Right lobe of liver (tissue), 6 donors: ENCODE measurements at regions of chr17 and their contacts with region 1.

Region 1: GRCh38 chr17:45197555-45198334 is 23.9 kb upstream of the FMNL1 start:
- DNase-seq: peak; percentile 94 to 95 (median 95)
- ATAC-seq: peak; percentile 96 to 99 (median 98)
- H3K4me3 ChIP-seq: no peak overlapping the region
- H3K27ac ChIP-seq: peak overlapping the region in 2 of 3 donors; percentile 40 to 47
- H3K4me1 ChIP-seq: peaks cover 0 to 17% (median 8%) of the 10 kb centered on the region in 4 donors
- H3K27me3 ChIP-seq: no peaks in the 10 kb centered on the region
- CTCF ChIP-seq: peak; percentile 99 to 100 (median 100)
- POLR2A ChIP-seq: no peak

Region 2: GRCh38 chr17:45135192-45135977 is 62.4 kb before region 1 on chr17 and contains the start of gene ACBD4:
- intact Hi-C with region 1: loop called in 1 of 2 experiments (anchors 5 kb)
- DNase-seq: peak; percentile 94 to 97 (median 94)
- ATAC-seq: peak; percentile 72 to 81 (median 75)
- H3K4me3 ChIP-seq: peak within 1 kb of the TSS; percentile 72 to 92 (median 79)
- H3K27ac ChIP-seq: peak within 1 kb of the TSS; percentile 85 to 98 (median 89)
- H3K4me1 ChIP-seq: peaks cover 0 to 36% (median 6%) of the 10 kb centered on the region in 4 donors
- H3K27me3 ChIP-seq: no peaks in the 10 kb centered on the region
- CTCF ChIP-seq: peak; percentile 100
- POLR2A ChIP-seq: peak; percentile 93
- total RNA-seq, gene ACBD4: 24.0 to 78.9 (median 56.9) TPM

Region 3: DNA sequence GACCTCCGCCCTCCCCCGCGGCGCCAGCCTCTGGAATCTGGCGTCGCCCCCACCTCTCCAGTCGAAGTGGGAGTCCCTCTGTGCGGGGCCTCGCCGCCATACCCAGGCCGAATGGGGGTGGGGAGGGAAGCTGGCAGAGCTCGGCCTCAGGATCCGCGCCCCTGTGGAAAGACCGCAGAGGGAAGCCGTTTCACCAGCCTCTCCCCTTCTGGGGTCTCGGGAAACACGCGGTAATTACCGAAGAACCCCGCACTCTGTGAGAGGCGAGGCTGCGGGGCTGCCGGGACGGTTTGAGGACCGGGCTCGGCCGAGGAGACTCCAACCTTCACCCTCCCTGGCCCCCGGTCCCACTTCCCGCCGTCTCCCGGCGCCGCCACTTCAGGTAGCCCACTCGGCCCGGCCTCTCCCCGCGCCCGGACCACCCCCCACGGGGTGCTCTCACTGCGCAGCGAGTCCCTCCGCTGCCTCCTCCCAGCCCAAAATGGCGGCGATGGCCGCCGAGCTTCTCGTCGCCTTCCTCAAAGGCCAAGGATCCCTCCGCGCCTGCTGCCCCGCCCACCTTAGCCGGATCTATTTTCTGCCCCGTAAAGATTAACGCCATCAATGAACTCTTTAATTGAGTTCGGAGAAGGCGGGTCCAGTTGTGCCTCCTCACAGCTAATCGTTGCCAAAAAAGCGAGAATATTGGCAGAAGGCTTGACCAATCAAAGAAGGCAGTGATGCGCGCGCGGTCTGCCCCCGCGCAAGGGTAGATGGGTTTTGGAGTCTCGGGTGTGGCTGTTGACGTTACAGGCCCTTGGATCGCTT is 36.5 kb before region 1 on chr17:
- intact Hi-C with region 1: loop called in 1 of 2 experiments (anchors 5 kb)
- DNase-seq: peak; percentile 96 to 98 (median 98)
- ATAC-seq: peak; percentile 90 to 97 (median 92)
- H3K4me3 ChIP-seq: peak overlapping the region; percentile 89 to 91 (median 90)
- H3K27ac ChIP-seq: peak overlapping the region; percentile 100
- H3K4me1 ChIP-seq: peaks cover 0 to 52% (median 12%) of the 10 kb centered on the region in 4 donors
- H3K27me3 ChIP-seq: no peaks in the 10 kb centered on the region
- CTCF ChIP-seq: peak in 2 of 4 donors; percentile 11 to 18
- POLR2A ChIP-seq: peak; percentile 89

Region 4: DNA sequence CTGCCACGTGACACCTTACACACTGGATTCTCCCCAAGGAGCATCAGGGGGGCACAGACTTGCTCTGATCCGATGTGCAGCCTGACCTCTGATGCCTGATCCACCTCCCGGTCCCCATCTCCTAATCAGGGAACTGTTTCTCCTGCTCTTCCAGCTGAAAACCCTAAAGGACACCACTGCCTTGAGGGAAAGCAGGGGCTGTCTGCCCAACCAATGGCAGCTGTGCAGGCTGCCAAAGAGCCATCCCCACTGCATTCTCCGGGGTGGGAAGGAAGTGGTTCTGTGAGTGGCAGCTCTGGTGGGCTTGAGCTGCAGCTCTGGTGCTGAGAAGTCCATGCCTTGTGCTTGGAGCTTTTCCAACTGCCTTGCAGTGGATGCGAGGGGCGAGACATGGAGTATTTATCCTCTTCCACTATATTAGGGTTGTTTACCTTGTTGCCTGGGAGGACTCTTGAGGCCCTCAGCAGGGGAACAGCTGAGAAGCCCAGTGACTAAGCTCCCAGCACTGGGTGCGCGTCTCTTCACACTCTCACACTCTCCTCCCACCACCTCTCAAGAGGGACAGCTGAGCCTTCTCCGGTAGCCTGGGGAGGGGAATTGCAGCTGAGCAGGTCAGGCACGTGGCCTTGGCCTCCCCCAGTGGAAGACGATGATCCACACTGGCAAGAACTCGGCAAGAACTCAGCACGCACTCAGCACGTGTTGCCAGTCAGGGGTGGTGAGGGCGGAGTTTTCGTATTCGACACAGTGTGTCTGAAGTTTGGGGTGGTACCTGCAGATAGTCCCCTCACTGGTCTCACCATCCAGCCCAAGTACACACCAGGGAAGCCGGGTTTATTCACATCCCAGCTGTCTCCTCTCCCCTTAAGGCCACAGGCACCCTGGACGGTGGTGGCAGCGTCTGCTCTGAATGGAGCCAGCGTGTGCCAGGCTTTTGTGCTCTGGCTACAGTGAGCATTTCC is 85.2 kb after region 1 on chr17:
- intact Hi-C with region 1: no loop called
- DNase-seq: no peak
- ATAC-seq: no peak
- H3K4me3 ChIP-seq: no peak overlapping the region
- H3K27ac ChIP-seq: no peak overlapping the region
- H3K4me1 ChIP-seq: peaks cover 0 to 20% (median 7%) of the 10 kb centered on the region in 4 donors
- H3K27me3 ChIP-seq: no peaks in the 10 kb centered on the region
- CTCF ChIP-seq: no peak
- POLR2A ChIP-seq: no peak

Region 5: GRCh38 chr17:45293413-45294211 is 95.9 kb after region 1 on chr17:
- intact Hi-C with region 1: no loop called
- DNase-seq: peak; percentile 74 to 89 (median 84)
- ATAC-seq: peak; percentile 76 to 88 (median 80)
- H3K4me3 ChIP-seq: no peak overlapping the region
- H3K27ac ChIP-seq: peak overlapping the region; percentile 11 to 87 (median 66)
- H3K4me1 ChIP-seq: peaks cover 2 to 83% (median 40%) of the 10 kb centered on the region in 4 donors
- H3K27me3 ChIP-seq: no peaks in the 10 kb centered on the region
- CTCF ChIP-seq: no peak
- POLR2A ChIP-seq: no peak

Region 6: DNA sequence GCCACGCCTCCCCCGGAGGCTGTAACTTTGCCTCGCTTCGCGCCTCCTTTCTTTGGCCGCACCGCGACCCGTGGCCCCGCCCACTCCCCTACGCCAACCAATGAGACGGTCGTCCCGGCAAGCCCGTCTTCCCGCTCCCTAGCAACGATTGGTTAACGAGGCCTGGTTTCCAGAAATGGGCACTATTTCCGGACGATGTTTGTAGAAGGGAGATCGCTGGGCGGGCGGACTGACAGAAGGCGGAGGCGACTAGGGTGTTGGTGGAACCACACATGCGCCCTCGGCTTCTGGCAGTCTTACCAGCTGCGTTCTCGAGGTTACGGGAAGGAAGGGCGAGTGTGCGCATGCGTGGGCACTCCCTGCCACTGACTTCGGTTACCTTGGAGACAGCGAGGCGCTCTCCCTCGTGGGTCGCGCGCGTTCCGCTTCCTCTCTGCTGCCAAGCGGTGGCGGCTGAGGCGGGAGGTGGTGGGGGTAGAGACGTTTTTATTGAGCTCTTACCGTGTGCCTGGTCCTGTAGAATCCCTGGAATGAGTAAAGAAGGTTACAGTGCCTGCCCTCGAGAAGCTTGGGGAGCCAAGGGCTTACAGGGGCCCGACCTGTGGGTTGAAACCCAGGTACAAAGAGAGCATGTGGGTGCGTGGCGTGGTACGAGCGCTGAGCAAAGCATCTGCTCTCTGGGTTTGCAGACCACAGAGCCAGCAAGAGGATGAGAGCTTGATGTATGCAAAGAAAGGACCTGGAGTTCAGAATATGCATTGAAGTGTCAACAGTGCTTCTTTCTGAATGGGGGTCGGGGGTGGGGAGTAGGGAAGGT is 119.6 kb after region 1 on chr17:
- intact Hi-C with region 1: no loop called
- DNase-seq: peak; percentile 100
- ATAC-seq: peak; percentile 85 to 92 (median 90)
- H3K4me3 ChIP-seq: peak overlapping the region; percentile 65 to 86 (median 80)
- H3K27ac ChIP-seq: peak overlapping the region; percentile 86 to 93 (median 87)
- H3K4me1 ChIP-seq: peaks cover 0 to 37% (median 18%) of the 10 kb centered on the region in 4 donors
- H3K27me3 ChIP-seq: no peaks in the 10 kb centered on the region
- CTCF ChIP-seq: no peak
- POLR2A ChIP-seq: no peak